GM10248 (cell line): ENCODE measurements at regions of chr12 and their contacts with region 1.

Region 1: DNA sequence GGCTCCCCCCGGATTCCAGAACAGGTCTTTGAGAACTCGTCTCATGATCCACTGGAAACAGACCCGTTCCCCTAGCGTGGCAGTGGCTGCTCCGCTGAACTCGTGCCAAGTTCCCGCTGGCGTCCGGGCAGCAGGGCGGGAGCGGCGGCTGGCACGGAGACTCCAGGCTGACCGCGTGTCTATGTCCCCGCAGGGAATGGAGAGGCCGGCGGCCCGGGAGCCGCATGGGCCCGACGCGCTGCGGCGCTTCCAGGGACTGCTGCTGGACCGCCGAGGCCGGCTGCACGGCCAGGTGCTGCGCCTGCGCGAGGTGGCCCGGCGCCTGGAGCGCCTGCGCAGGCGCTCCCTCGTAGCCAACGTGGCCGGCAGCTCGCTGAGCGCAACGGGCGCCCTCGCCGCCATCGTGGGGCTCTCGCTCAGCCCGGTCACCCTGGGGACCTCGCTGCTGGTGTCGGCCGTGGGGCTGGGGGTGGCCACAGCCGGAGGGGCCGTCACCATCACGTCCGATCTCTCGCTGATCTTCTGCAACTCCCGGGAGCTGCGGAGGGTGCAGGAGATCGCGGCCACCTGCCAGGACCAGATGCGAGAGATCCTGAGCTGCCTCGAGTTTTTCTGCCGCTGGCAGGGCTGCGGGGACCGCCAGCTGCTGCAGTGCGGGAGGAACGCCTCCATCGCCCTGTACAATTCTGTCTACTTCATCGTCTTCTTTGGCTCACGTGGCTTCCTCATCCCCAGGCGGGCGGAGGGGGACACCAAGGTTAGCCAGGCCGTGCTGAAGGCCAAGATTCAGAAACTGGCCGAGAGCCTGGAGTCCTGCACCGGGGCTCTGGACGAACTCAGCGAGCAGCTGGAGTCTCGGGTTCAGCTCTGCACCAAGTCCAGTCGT is 1.5 kb downstream of the APOLD1 start:
- DNase-seq: peak; percentile 96
- CTCF ChIP-seq: peak; percentile 2

Region 2: GRCh38 chr12:12797794-12798152 is 10.8 kb after region 1 on chr12:
- CTCF ChIA-PET with region 1: interaction called, 70 read pairs
- POLR2A ChIA-PET with region 1: no interaction called
- DNase-seq: no peak
- CTCF ChIP-seq: no peak

Region 3: DNA sequence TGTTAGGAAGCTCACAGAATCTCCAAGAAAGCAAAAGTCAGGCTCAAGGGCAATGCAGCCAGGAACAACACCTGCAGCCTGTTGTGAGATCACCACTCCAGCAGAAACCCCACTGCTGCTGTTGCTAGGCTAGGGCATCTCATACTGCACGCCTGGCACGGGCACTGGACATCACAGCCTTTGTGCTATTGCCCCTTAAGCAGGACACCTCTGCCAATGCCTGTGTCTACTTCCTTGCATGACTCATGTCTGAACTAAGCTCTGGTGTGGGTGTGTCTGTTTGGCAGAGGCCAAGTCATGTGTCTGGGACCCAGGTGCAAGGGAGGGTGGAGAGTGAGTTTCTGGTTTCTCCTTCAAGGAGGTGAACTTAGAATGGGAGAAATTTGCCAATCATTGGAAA is 16.2 kb after region 1 on chr12:
- CTCF ChIA-PET with region 1: interaction called, 70 read pairs
- POLR2A ChIA-PET with region 1: interaction called, 3 read pairs
- DNase-seq: peak; percentile 68
- CTCF ChIP-seq: no peak

Region 4: GRCh38 chr12:12813120-12814101 is 26.5 kb after region 1 on chr12 and contains the start of gene DDX47:
- CTCF ChIA-PET with region 1: interaction called, 37 read pairs
- POLR2A ChIA-PET with region 1: no interaction called
- DNase-seq: peak; percentile 92
- CTCF ChIP-seq: peak; percentile 98

Region 5: GRCh38 chr12:12819671-12820311 is 32.8 kb after region 1 on chr12:
- CTCF ChIA-PET with region 1: interaction called, 37 read pairs
- POLR2A ChIA-PET with region 1: no interaction called
- DNase-seq: no peak
- CTCF ChIP-seq: no peak

Region 6: DNA sequence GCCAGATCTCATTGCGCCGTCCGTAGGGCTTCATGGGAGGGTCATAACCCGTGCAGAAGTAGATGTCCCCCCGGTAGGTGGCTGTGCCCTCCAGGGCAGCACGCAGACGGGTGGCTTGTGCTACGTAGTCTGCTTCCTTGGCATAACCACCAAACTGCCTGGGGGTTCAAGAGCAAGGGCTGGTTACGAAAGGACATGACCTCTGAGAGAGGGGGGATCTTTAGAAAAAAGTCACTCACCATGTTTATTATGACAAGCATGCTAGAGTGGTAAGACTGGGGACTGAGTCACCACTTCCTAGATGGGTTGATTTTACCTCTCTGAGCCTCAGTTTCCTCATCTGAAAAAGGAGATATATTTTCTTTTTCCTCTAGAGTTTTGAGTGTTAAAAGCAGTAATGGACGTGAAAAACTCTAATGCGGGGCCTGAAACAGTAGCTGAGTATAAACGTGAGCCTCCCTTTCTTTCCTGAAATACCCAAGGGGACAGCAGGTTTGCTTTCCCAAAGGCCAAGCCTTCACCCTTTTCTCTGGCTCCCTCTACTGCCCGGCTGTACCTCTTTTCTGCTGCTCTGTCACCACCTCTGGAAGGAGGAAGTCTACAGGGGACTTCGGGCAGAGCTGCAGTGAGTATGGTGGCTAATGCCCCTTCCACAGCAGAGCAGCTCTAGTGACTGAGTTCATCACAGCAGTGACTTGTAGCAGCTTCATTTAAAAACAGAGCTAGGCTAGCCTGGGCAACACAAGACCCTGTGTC is 188.5 kb after region 1 on chr12:
- CTCF ChIA-PET with region 1: interaction called, 12 read pairs
- POLR2A ChIA-PET with region 1: no interaction called
- DNase-seq: peak; percentile 23
- CTCF ChIP-seq: peak; percentile 51